ENCODE measurements at regions of chr3 and their contacts with region 1.

Region 1: GRCh38 chr3:157282261-157283191 is 122.6 kb upstream of the CCNL1 start:
- DNase-seq: peak; percentile 94
- H3K4me3 ChIP-seq: peak overlapping the region in 1 of 3 experiments; percentile 41
- H3K27ac ChIP-seq: peak overlapping the region; percentile 74
- H3K4me1 ChIP-seq: peaks cover 64% of the 10 kb centered on the region
- H3K27me3 ChIP-seq: no peaks in the 10 kb centered on the region
- CTCF ChIP-seq: no peak
- POLR2A ChIP-seq: no peak

Region 2: DNA sequence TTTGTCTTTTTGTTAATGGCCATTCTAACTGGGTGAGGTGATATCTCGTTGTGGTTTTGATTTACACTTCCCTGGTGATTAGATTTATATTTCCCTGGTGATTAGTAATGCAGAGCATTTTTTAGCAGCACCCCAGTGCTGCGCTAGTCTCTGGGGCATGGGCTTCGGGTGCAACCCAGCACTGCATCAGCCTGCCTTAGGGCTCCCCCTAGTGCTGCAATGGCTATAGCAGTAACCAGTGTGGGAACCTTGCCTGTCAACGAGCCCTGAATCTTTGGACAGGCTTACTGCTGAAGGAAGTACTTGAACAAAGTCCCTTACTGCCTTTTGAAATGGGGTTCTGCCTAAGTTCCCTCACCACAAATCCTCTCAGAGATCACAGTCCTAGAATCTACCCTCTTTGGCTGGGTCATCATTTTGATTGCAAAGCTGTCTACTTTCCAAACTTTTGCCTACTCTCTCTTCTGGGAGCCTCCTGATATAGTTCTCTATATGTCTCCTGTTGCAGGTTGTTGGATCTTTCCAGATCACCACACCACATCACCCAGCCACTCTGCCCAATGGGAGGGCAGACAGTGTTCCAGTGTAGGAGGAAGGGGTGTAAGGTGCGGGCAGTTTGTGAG is 43.3 kb before region 1 on chr3:
- CTCF ChIA-PET with region 1: interaction called, 3 read pairs
- POLR2A ChIA-PET with region 1: no interaction called
- dilution Hi-C with region 1: no loop called
- intact Hi-C with region 1: loop called (anchors 2 kb)
- DNase-seq: peak; percentile 57
- H3K4me3 ChIP-seq: no peak overlapping the region
- H3K27ac ChIP-seq: no peak overlapping the region
- H3K4me1 ChIP-seq: peaks cover 15% of the 10 kb centered on the region
- H3K27me3 ChIP-seq: no peaks in the 10 kb centered on the region
- CTCF ChIP-seq: peak; percentile 71 to 79
- POLR2A ChIP-seq: no peak

Region 3: DNA sequence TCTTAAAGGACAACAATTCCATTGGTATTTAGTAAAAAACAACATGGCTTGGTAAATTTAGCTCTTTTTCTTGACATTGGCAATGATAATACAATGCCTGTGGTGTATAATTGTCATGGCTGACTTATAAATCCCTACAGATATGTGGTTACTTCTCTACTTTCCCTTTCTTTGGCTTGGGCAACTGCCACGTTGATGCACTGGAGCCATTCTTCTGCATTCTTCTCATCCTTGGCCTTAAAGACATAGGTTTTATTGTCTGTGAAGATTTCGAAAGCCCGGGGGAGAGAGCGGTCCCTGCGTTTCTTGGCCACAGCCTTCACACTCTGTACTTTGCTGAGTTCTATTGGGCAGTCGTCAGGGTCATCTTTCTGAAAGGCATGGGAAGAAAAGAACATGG is 21.5 kb before region 1 on chr3:
- CTCF ChIA-PET with region 1: interaction called, 3 read pairs
- POLR2A ChIA-PET with region 1: no interaction called
- dilution Hi-C with region 1: no loop called
- intact Hi-C with region 1: loop called (anchors 1 kb)
- DNase-seq: no peak
- H3K4me3 ChIP-seq: no peak overlapping the region
- H3K27ac ChIP-seq: no peak overlapping the region
- H3K4me1 ChIP-seq: peaks cover 17% of the 10 kb centered on the region
- H3K27me3 ChIP-seq: no peaks in the 10 kb centered on the region
- CTCF ChIP-seq: no peak
- POLR2A ChIP-seq: no peak

Region 4: GRCh38 chr3:157335198-157336076 is 52.9 kb after region 1 on chr3:
- CTCF ChIA-PET with region 1: interaction called, 4 read pairs
- POLR2A ChIA-PET with region 1: no interaction called
- dilution Hi-C with region 1: no loop called
- intact Hi-C with region 1: loop called (anchors 1 kb)
- DNase-seq: peak; percentile 98
- H3K4me3 ChIP-seq: no peak overlapping the region
- H3K27ac ChIP-seq: peak overlapping the region; percentile 84
- H3K4me1 ChIP-seq: peaks cover 43% of the 10 kb centered on the region
- H3K27me3 ChIP-seq: no peaks in the 10 kb centered on the region
- CTCF ChIP-seq: no peak
- POLR2A ChIP-seq: peak; percentile 67

Region 5: GRCh38 chr3:157417247-157417646 is 134.7 kb after region 1 on chr3:
- CTCF ChIA-PET with region 1: no interaction called
- POLR2A ChIA-PET with region 1: no interaction called
- dilution Hi-C with region 1: no loop called
- intact Hi-C with region 1: loop called (anchors 1 kb)
- DNase-seq: peak; percentile 50
- H3K4me3 ChIP-seq: peak overlapping the region in 1 of 3 experiments; percentile 27
- H3K27ac ChIP-seq: peak overlapping the region; percentile 95
- H3K4me1 ChIP-seq: peaks cover 43% of the 10 kb centered on the region
- H3K27me3 ChIP-seq: no peaks in the 10 kb centered on the region
- CTCF ChIP-seq: no peak
- POLR2A ChIP-seq: no peak

Region 6: GRCh38 chr3:157447026-157447694 is 164.6 kb after region 1 on chr3:
- CTCF ChIA-PET with region 1: no interaction called
- POLR2A ChIA-PET with region 1: no interaction called
- dilution Hi-C with region 1: no loop called
- intact Hi-C with region 1: no loop called
- DNase-seq: peak; percentile 67
- H3K4me3 ChIP-seq: no peak overlapping the region
- H3K27ac ChIP-seq: no peak overlapping the region
- H3K4me1 ChIP-seq: peaks cover 34% of the 10 kb centered on the region
- H3K27me3 ChIP-seq: no peaks in the 10 kb centered on the region
- CTCF ChIP-seq: peak; percentile 47 to 54
- POLR2A ChIP-seq: no peak